ENCODE measurements at regions of chr4 and their contacts with region 1.

Region 1: DNA sequence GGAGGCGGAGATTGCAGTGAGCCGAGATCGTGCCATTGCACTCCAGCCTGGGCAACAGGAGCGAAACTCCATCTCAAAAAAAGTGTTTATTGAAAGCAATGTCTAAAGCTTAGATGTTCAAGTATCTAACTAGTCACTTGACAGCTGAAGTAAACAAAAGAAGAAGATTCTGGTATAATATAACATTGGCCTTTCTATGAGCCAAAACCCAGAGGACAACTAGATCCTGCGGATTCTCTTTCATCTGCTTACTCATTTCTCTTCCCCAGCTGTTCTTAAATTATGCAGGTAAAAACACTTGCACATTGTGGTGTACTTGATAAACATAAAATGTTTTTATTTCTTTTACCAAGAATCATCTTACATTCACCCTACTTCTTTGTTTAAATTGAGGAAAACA is 24.1 kb upstream of the AREG start:
- DNase-seq: no peak
- H3K4me3 ChIP-seq: no peak overlapping the region
- H3K27ac ChIP-seq: no peak overlapping the region
- H3K4me1 ChIP-seq: peaks cover 0 to 15% (median 0%) of the 10 kb centered on the region in 4 donors
- H3K27me3 ChIP-seq: no peaks in the 10 kb centered on the region
- CTCF ChIP-seq: no peak
- EP300 ChIP-seq: no peak
- POLR2A ChIP-seq: no peak

Region 2: GRCh38 chr4:74402692-74403456 is 18.0 kb before region 1 on chr4:
- in situ Hi-C with region 1: no loop called
- intact Hi-C with region 1: loop called (anchors 1 kb)
- DNase-seq: no peak
- H3K4me3 ChIP-seq: no peak overlapping the region
- H3K27ac ChIP-seq: no peak overlapping the region
- H3K4me1 ChIP-seq: peaks cover 0 to 3% (median 0%) of the 10 kb centered on the region in 4 donors
- H3K27me3 ChIP-seq: no peaks in the 10 kb centered on the region
- CTCF ChIP-seq: no peak
- EP300 ChIP-seq: no peak
- POLR2A ChIP-seq: no peak

Measured in transverse colon (tissue), 4 donors.